ENCODE measurements at regions of chr15 and their contacts with region 1.

Region 1: GRCh38 chr15:39686000-39686613 is 96.5 kb downstream of the FSIP1 start:
- DNase-seq: peak; percentile 63
- H3K4me3 ChIP-seq: no peak overlapping the region
- H3K27ac ChIP-seq: no peak overlapping the region
- H3K4me1 ChIP-seq: no peaks in the 10 kb centered on the region
- H3K27me3 ChIP-seq: no peaks in the 10 kb centered on the region
- CTCF ChIP-seq: peak; percentile 76 to 82 (median 77)
- POLR2A ChIP-seq: no peak

Region 2: DNA sequence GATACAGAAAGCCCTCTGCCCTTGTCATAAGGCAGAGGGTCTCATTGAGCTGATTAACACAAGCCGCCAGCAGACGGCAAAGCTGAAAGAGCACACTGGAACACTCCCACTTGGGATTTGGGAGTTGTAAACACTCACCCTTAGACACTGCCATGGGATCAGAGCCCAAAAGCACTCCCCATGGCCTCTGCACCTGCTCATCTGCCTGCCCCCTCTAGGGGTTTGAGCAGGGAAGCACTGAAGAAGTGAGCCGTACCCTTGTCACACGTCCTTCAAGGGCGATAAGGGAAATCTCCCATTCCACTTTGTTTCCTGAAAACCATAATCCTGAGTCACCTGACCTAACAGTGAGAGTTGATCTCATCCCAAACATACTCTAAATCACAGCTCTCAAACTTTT is 81.8 kb after region 1 on chr15:
- intact Hi-C with region 1: loop called (anchors 10 kb)
- DNase-seq: no peak
- H3K4me3 ChIP-seq: no peak overlapping the region
- H3K27ac ChIP-seq: no peak overlapping the region
- H3K4me1 ChIP-seq: no peaks in the 10 kb centered on the region
- H3K27me3 ChIP-seq: no peaks in the 10 kb centered on the region
- CTCF ChIP-seq: no peak
- POLR2A ChIP-seq: no peak

Measured in testis (tissue), 5 donors.